HepG2 (cell line): ENCODE measurements at regions of chr10 and their contacts with region 1.

Region 1: GRCh38 chr10:89466599-89467035 is 52.2 kb downstream of the IFIT5 start:
- DNase-seq: peak; percentile 18
- ATAC-seq: peak; percentile 91
- H3K4me3 ChIP-seq: no peak overlapping the region
- H3K27ac ChIP-seq: no peak overlapping the region
- H3K4me1 ChIP-seq: peaks cover 24% of the 10 kb centered on the region
- H3K27me3 ChIP-seq: no peaks in the 10 kb centered on the region; a peak in 1 of 5 replicates
- CTCF ChIP-seq: peak; percentile 60
- EP300 ChIP-seq: no peak
- POLR2A ChIP-seq: no peak
- RAD21 ChIP-seq: no peak

Region 2: GRCh38 chr10:89563861-89564478 is 97.4 kb after region 1 on chr10:
- CTCF ChIA-PET with region 1: interaction called, 4 read pairs
- POLR2A ChIA-PET with region 1: no interaction called
- in situ Hi-C with region 1: no loop called
- intact Hi-C with region 1: loop called (anchors 2 kb)
- DNase-seq: peak; percentile 32
- ATAC-seq: peak; percentile 64
- H3K4me3 ChIP-seq: no peak overlapping the region
- H3K27ac ChIP-seq: no peak overlapping the region
- H3K4me1 ChIP-seq: peaks cover 18% of the 10 kb centered on the region
- H3K27me3 ChIP-seq: no peaks in the 10 kb centered on the region; a peak in 1 of 5 replicates
- CTCF ChIP-seq: peak; percentile 67
- EP300 ChIP-seq: no peak
- POLR2A ChIP-seq: no peak
- RAD21 ChIP-seq: peak; percentile 61